GM12878 (cell line): ENCODE measurements at regions of chr7 and their contacts with region 1.

Region 1: DNA sequence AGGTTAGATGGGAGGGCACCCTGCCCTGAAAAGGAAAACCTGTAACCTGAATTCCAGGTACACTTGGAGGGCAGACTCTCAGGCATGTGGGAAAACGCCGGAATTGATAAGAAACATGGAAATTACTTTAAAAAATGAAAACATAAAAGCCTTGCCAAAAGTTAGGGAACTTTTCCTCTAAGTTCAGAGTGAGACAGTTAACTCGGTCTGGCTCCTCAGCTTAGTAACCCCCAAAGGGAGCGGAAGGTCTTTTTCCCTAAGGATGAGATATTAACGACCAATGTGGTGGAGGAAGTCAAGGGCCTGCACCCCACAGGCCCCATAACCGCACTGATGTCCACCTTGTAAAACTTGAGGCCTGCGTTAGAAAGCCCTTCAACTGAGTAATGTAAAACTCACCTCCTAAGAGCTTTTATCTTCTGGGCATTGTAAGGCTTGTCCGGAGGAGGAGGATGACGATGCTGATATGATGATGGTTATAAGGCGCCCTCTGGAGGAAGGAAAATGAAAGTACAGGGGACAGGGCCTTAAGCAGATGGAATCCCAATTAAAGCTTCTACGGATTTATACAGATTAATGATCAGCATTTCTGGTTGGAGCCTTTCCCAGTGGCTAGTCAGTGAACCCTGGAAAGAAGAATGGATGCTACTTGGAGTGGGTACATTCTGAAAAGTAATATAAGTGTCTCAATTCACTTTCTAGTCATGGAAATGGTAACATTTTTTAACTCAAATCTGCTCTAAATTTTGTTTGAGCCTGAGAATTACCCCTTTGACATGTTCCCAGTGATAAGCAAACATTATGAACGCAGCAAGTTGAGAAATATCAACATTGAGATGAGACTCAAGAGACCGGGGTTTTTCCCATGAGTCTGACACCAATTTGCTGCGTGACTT is 694 bp downstream of the COL1A2 start:
- DNase-seq: peak; percentile 12
- ATAC-seq: peak; percentile 93
- H3K4me3 ChIP-seq: no peak overlapping the region
- H3K27ac ChIP-seq: no peak overlapping the region
- H3K4me1 ChIP-seq: no peaks in the 10 kb centered on the region
- H3K27me3 ChIP-seq: peaks cover 2 to 3% of the 10 kb centered on the region in 2 experiments; a peak in 2 of 4 replicates
- CTCF ChIP-seq: peak; percentile 63 to 79 (median 76)
- EP300 ChIP-seq: no peak
- POLR2A ChIP-seq: no peak
- RAD21 ChIP-seq: peak; percentile 90

Region 2: GRCh38 chr7:93622036-93623033 is 773.1 kb before region 1 on chr7:
- CTCF ChIA-PET with region 1: interaction called, 7 read pairs
- POLR2A ChIA-PET with region 1: no interaction called
- RAD21 ChIA-PET with region 1: interaction called, 3 read pairs
- SMC1A ChIA-PET with region 1: interaction called, 3 read pairs
- in situ Hi-C with region 1: no loop called
- intact Hi-C with region 1: loop called (anchors 10 kb)
- DNase-seq: no peak
- ATAC-seq: peak; percentile 68
- H3K4me3 ChIP-seq: no peak overlapping the region
- H3K27ac ChIP-seq: no peak overlapping the region
- H3K4me1 ChIP-seq: no peaks in the 10 kb centered on the region
- H3K27me3 ChIP-seq: no peaks in the 10 kb centered on the region
- CTCF ChIP-seq: peak in 2 of 3 experiments; percentile 22 to 34; a peak in 3 of 6 replicates
- EP300 ChIP-seq: no peak
- POLR2A ChIP-seq: no peak
- RAD21 ChIP-seq: peak; percentile 29

Region 3: GRCh38 chr7:93799750-93800357 is 595.5 kb before region 1 on chr7:
- CTCF ChIA-PET with region 1: interaction called, 23 read pairs
- POLR2A ChIA-PET with region 1: no interaction called
- RAD21 ChIA-PET with region 1: interaction called, 7 read pairs
- SMC1A ChIA-PET with region 1: interaction called, 11 read pairs
- in situ Hi-C with region 1: loop called (anchors 5 kb)
- intact Hi-C with region 1: loop called (anchors 1 kb)
- DNase-seq: no peak
- ATAC-seq: peak; percentile 54
- H3K4me3 ChIP-seq: no peak overlapping the region
- H3K27ac ChIP-seq: no peak overlapping the region
- H3K4me1 ChIP-seq: no peaks in the 10 kb centered on the region
- H3K27me3 ChIP-seq: no peaks in the 10 kb centered on the region
- CTCF ChIP-seq: peak; percentile 36 to 51 (median 41); a peak in 4 of 6 replicates
- EP300 ChIP-seq: no peak
- POLR2A ChIP-seq: no peak
- RAD21 ChIP-seq: peak; percentile 56

Region 4: DNA sequence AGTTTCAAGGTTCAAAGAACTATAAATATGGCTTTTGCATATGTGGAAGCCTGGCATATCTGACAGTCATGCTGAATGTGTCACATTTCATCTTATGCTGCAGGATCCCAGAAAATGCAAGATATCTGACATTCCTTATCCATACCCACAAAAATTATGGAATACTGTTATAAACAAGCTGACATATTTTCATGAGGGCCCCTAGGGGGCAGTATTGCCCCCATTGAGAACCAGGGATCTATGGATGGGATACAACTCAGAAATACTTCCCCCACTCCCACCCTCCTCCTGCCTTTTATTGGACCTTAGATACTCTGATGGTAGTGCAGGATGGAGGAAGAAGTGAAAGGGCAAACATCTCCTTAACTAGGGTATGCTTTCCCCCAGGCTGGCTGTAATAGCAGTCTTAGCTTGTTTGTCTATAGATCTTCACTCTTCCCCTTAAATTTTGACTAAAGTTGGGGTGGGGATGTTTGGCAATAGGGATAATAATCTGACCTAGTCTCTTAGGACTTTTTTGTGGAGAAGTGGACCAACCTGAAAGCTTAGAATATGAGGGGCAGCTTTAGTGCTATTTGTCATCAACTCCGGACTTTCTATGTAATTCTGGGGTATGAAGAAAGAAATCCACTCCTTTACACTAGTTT is 492.5 kb before region 1 on chr7:
- CTCF ChIA-PET with region 1: interaction called, 15 read pairs
- POLR2A ChIA-PET with region 1: no interaction called
- RAD21 ChIA-PET with region 1: interaction called, 10 read pairs
- SMC1A ChIA-PET with region 1: interaction called, 11 read pairs
- in situ Hi-C with region 1: no loop called
- intact Hi-C with region 1: loop called (anchors 2 kb)
- DNase-seq: no peak
- ATAC-seq: peak; percentile 56
- H3K4me3 ChIP-seq: no peak overlapping the region
- H3K27ac ChIP-seq: no peak overlapping the region
- H3K4me1 ChIP-seq: no peaks in the 10 kb centered on the region
- H3K27me3 ChIP-seq: no peaks in the 10 kb centered on the region
- CTCF ChIP-seq: peak; percentile 66 to 72 (median 69)
- EP300 ChIP-seq: no peak
- POLR2A ChIP-seq: no peak
- RAD21 ChIP-seq: peak; percentile 86

Region 5: GRCh38 chr7:94687810-94688209 is 292.4 kb after region 1 on chr7:
- CTCF ChIA-PET with region 1: no interaction called
- POLR2A ChIA-PET with region 1: no interaction called
- RAD21 ChIA-PET with region 1: no interaction called
- SMC1A ChIA-PET with region 1: no interaction called
- in situ Hi-C with region 1: no loop called
- intact Hi-C with region 1: no loop called
- DNase-seq: no peak
- ATAC-seq: no peak
- H3K4me3 ChIP-seq: no peak overlapping the region
- H3K27ac ChIP-seq: no peak overlapping the region
- H3K4me1 ChIP-seq: no peaks in the 10 kb centered on the region
- H3K27me3 ChIP-seq: no peaks in the 10 kb centered on the region
- CTCF ChIP-seq: no peak
- EP300 ChIP-seq: no peak
- POLR2A ChIP-seq: no peak
- RAD21 ChIP-seq: no peak